ENCODE measurements at regions of chr17 and their contacts with region 1.

Region 1: DNA sequence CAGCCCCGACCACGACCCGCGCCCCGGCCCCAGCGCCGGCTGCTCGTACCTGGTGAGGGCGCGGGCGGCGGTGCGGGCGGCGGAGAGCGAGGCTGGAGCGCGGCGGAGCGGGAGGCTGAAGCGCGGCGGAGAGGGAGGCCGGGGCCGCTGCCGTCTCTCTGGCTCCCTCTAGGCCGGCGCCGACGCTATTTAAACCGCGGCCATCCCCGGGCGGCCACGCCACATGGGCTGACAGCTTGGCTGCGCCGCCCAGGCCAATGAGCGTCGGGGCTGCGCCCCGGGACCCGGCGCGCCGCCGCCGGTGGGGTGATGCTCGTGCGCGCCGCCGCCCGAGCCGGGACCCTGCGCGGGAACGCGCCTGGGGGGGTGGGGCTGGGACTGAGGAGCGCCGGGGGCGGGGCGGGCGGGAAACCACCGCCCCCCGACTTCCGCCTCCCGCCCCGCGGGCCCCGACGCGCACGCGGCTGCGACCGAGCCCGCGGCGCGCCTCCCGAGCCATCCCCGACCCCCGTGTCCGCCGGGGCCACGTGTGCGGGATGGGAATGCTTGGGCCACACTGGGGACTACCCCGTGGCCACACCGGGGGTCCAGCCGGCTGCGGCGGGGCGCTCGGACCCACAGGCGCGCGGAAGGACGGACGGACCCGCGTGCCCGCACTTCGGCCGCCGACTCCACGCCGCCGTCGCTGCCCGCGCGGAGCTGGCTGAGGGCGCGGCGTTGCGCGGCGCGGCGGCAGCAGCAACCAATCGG is at the start of gene FASN:
- DNase-seq: peak; percentile 88 to 94 (median 91)
- H3K4me3 ChIP-seq: peak within 1 kb of the TSS; percentile 23 to 66
- H3K4me3 Mint-ChIP-seq: peak within 1 kb of the TSS; percentile 35 to 82 (median 68)
- H3K27ac ChIP-seq: peak within 1 kb of the TSS; percentile 78
- H3K27ac Mint-ChIP-seq: peak within 1 kb of the TSS in 4 of 7 donors; percentile 22 to 86 (median 26)
- H3K4me1 ChIP-seq: peaks cover 20% of the 10 kb centered on the region
- H3K4me1 Mint-ChIP-seq: peaks cover 0 to 20% (median 2%) of the 10 kb centered on the region in 4 donors
- H3K27me3 ChIP-seq: no peaks in the 10 kb centered on the region
- H3K27me3 Mint-ChIP-seq: no peaks in the 10 kb centered on the region
- total RNA-seq, gene FASN: 26.5 to 27.7 TPM

Region 2: GRCh38 chr17:82030470-82031302 is 67.6 kb before region 1 on chr17:
- CTCF ChIA-PET with region 1: interaction called, 3 read pairs
- POLR2A ChIA-PET with region 1: interaction called, 16 read pairs
- intact Hi-C with region 1: no loop called
- DNase-seq: peak; percentile 78 to 88 (median 85)
- H3K4me3 ChIP-seq: peak overlapping the region in 1 of 2 donors; percentile 46
- H3K4me3 Mint-ChIP-seq: peak overlapping the region; percentile 79 to 89 (median 86)
- H3K27ac ChIP-seq: no peak overlapping the region
- H3K27ac Mint-ChIP-seq: peak overlapping the region in 6 of 7 donors; percentile 48 to 91 (median 76)
- H3K4me1 ChIP-seq: peaks cover 13% of the 10 kb centered on the region
- H3K4me1 Mint-ChIP-seq: peaks cover 5 to 14% (median 10%) of the 10 kb centered on the region in 4 donors
- H3K27me3 ChIP-seq: no peaks in the 10 kb centered on the region
- H3K27me3 Mint-ChIP-seq: no peaks in the 10 kb centered on the region

Region 3: GRCh38 chr17:82051776-82052637 is 46.2 kb before region 1 on chr17 and contains the starts of genes GPS1 and RFNG:
- CTCF ChIA-PET with region 1: no interaction called
- POLR2A ChIA-PET with region 1: interaction called, 9 read pairs
- intact Hi-C with region 1: loop called (anchors 5 kb)
- DNase-seq: peak; percentile 77 to 79 (median 78)
- H3K4me3 ChIP-seq: peak within 1 kb of the TSS; percentile 29 to 69
- H3K4me3 Mint-ChIP-seq: peak within 1 kb of the TSS; percentile 79 to 91 (median 84)
- H3K27ac ChIP-seq: peak within 1 kb of the TSS; percentile 55
- H3K27ac Mint-ChIP-seq: peak within 1 kb of the TSS; percentile 38 to 91 (median 87)
- H3K4me1 ChIP-seq: peaks cover 31% of the 10 kb centered on the region
- H3K4me1 Mint-ChIP-seq: peaks cover 3 to 22% (median 11%) of the 10 kb centered on the region in 4 donors
- H3K27me3 ChIP-seq: no peaks in the 10 kb centered on the region
- H3K27me3 Mint-ChIP-seq: no peaks in the 10 kb centered on the region
- total RNA-seq, gene GPS1: 85.1 to 89.0 TPM
- total RNA-seq, gene RFNG: 37.6 to 44.0 TPM

Region 4: DNA sequence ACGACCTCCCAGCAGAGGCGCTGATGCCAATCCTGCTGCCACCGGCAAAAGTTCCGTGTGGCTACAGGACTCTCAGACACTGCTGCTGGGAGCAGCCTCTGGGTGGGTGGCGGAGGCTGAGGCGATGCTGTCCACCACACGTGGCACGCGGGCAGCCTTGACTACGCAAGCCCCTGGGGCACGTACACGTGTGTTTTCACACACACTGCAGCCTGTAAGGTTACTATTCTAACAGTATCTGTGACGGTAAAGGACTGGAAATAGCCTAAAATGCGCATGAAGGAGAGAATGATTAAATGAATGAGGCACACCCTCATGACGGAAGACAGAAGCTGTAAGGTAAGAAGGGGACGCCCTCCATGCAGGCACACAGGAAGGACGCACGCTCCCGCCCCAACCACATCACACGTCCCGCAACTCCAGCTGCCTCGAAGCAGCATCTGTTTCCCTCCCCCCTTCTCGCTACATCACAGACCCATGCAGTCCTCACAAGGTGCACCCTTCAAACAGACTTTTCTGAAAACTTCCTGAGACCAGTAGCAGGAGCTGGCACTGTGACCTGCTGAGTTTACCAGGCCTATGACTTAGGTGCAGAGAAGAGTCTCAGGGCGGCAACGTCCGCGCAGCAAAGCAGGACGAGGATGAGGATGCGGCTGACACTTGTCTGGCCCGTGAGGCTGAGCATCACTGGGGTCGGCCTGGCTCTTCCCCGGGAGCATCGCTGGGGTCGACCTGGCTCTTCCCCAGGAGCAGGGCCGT is 28.5 kb after region 1 on chr17:
- CTCF ChIA-PET with region 1: interaction called, 7 read pairs
- POLR2A ChIA-PET with region 1: interaction called, 50 read pairs
- intact Hi-C with region 1: loop called (anchors 1 kb)
- DNase-seq: peak; percentile 96 to 98 (median 97)
- H3K4me3 ChIP-seq: peak overlapping the region in 1 of 2 donors; percentile 45
- H3K4me3 Mint-ChIP-seq: peak overlapping the region; percentile 74 to 87 (median 82)
- H3K27ac ChIP-seq: peak overlapping the region; percentile 77
- H3K27ac Mint-ChIP-seq: peak overlapping the region; percentile 91 to 100 (median 99)
- H3K4me1 ChIP-seq: peaks cover 66% of the 10 kb centered on the region
- H3K4me1 Mint-ChIP-seq: peaks cover 27 to 70% (median 51%) of the 10 kb centered on the region in 4 donors
- H3K27me3 ChIP-seq: no peaks in the 10 kb centered on the region
- H3K27me3 Mint-ChIP-seq: no peaks in the 10 kb centered on the region

Measured in CD4-positive, alpha-beta memory T cell (primary cell).